ENCODE measurements at regions of chr17 and their contacts with region 1.

Region 1: DNA sequence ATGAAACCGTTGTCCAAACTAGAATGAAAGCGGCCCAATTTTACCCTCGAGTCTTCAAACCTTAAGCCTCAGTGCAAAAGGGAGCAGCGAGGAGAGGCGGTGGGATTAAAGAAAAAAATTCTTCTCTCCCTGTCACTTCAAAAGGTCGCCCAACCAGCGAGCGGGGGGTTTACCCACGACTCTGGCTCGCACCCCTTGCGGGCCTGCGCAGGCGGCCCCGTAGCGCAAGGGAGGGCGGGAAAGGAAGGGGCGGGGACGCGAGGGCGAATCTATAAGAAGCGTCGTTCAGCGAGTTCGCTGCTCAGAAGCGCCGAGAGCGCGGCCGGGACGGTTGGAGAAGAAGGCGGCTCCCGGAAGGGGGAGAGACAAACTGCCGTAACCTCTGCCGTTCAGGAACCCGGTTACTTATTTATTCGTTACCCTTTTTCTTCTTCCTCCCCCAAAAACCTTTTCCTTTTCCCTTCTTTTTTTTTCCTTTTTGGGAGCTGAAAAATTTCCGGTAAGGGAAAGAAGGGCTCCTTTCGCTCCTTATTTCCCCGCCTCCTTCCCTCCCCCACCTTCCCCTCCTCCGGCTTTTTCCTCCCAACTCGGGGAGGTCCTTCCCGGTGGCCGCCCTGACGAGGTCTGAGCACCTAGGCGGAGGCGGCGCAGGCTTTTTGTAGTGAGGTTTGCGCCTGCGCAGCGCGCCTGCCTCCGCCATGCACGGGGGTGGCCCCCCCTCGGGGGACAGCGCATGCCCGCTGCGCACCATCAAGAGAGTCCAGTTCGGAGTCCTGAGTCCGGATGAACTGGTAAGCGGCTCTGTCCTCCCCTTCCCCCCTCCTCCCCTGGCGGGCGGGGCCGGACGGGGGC is at the start of gene POLR2A:
- DNase-seq: peak; percentile 99
- CTCF ChIP-seq: no peak

Region 2: DNA sequence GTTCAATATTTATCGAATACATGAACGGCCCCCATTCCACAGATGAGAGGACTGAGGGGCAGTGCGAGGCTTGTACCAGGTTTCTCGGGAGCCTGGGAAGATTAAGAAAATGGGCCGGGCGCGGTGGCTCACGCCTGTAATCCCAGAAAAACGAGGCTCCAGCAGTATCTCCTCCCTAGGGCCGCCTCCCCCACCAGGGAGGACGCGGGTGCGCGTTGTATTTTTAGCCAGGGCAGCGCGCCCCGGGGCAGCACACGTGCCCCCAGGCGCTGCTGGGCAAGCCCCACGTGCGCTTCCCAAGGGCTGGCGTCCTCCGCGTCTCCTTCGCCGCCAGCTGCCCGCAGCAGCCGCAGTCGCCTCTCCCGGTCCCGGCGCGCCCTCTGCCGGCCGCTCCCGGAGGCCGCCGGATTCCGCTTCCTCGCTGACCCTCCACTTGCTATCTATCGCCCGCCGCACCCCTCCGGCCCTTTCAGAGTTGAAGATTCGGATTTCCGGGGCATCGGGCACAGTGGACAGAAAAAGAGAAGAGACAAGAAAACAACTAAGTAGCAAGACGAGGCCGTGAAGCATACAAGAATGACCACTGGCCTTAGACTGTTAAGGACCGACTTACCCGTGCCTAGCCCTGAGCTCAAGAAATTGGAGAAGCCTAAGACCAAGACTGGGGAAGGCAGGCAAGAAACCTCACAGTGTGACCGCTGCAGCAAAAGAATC is 187.9 kb before region 1 on chr17:
- CTCF ChIA-PET with region 1: no interaction called
- POLR2A ChIA-PET with region 1: no interaction called
- DNase-seq: peak; percentile 87
- CTCF ChIP-seq: peak; percentile 93

Region 3: GRCh38 chr17:7435221-7435675 is 49.0 kb before region 1 on chr17 and contains the start of gene TMEM102:
- CTCF ChIA-PET with region 1: interaction called, 6 read pairs
- POLR2A ChIA-PET with region 1: interaction called, 12 read pairs
- DNase-seq: peak; percentile 97
- CTCF ChIP-seq: no peak

Region 4: GRCh38 chr17:7444682-7445618 is 39.3 kb before region 1 on chr17 and contains the start of gene CHRNB1:
- CTCF ChIA-PET with region 1: no interaction called
- POLR2A ChIA-PET with region 1: interaction called, 12 read pairs
- DNase-seq: peak; percentile 71
- CTCF ChIP-seq: no peak

Region 5: DNA sequence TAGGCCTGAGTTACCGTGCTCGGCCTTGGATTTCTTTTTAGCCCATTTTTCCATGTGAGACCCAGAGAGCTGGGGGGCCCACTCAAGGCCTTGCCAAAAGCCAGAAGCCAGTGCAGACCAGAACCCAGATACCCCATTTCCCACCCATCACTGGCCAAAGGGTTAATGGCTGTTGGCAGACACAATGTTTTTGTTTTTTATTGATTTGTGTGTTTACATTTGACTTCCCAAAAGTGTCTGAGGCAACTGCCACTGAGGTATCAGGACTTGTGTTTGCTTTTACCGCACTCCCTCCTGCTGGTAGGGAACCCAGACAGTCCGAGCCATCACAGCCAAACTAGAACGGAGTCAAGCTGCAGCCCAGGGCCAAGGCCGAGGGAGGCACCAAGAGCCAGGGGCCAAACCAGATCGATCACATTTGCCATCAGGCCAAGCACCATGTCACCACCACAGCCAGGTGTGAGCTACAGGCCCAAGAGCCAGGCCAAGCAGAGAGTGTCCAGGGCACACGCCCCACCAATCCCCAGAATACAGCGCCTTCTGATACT is 56.9 kb after region 1 on chr17:
- CTCF ChIA-PET with region 1: no interaction called
- POLR2A ChIA-PET with region 1: no interaction called
- DNase-seq: no peak
- CTCF ChIP-seq: no peak

Region 6: GRCh38 chr17:7583253-7584109 is 99.2 kb after region 1 on chr17 and contains the start of gene MPDU1:
- CTCF ChIA-PET with region 1: no interaction called
- POLR2A ChIA-PET with region 1: interaction called, 13 read pairs
- DNase-seq: peak; percentile 90
- CTCF ChIP-seq: no peak